Activated B cell treated with CpG ODN at 0.5 μM for 24 hours (primary cell): ENCODE measurements at regions of chr15 and their contacts with region 1.

Region 1: GRCh38 chr15:40743921-40744814 is 10.9 kb downstream of the RMDN3 start:
- DNase-seq: no peak
- ATAC-seq: no peak
- H3K4me3 Mint-ChIP-seq: no peak overlapping the region
- H3K27ac Mint-ChIP-seq: no peak overlapping the region
- H3K4me1 Mint-ChIP-seq: no peaks in the 10 kb centered on the region
- H3K27me3 Mint-ChIP-seq: no peaks in the 10 kb centered on the region
- CTCF ChIP-seq: no peak

Region 2: GRCh38 chr15:40684381-40684780 is 59.8 kb before region 1 on chr15:
- CTCF ChIA-PET with region 1: interaction called, 5 read pairs
- POLR2A ChIA-PET with region 1: no interaction called
- intact Hi-C with region 1: loop called (anchors 2 kb)
- DNase-seq: no peak
- ATAC-seq: no peak
- H3K4me3 Mint-ChIP-seq: no peak overlapping the region
- H3K27ac Mint-ChIP-seq: no peak overlapping the region
- H3K4me1 Mint-ChIP-seq: peaks cover 15% of the 10 kb centered on the region
- H3K27me3 Mint-ChIP-seq: no peaks in the 10 kb centered on the region
- CTCF ChIP-seq: no peak

Region 3: DNA sequence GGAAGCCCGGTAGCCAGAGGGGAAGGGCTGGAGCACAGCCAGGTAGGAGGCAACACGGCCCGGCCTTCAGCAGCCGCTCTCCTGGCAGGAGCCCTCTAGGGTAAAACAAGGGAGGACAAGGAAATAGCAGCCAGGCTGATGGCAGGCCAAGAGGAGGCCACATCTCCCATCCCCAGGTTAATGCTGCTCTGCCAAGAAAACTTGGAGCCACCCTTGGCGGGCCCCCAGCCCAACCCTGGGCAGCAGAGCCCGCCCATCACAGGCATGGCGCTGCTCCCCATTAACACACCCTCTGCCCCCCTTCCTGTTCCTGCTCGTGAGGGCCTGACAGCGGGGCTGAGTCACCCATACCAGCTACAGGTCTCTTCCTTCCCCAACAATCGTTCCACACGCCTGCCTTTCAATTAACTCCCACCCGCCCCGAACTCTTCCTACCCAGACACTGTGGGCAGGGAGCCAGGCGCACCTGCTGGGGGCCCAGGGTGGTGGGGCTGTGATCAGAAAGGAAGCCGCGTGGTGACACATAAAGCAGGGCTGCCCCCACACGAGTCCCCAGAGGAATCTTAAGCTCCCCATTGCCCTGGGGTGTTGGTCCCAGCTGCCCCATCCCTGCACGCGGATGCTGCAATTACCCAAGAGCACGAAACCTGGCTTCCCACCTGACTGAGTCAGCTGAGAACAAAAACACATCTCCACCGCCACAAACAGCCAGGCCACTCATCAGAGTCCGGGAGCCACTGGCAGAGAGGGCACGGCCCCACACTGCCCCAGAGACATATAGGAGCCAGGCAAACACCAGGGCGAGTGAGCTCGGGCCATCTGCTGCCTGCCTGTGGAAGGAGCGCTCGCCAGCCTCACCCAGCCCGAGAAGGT is 25.3 kb after region 1 on chr15 and contains the start of gene C15orf62:
- CTCF ChIA-PET with region 1: interaction called, 11 read pairs
- POLR2A ChIA-PET with region 1: no interaction called
- intact Hi-C with region 1: no loop called
- DNase-seq: peak; percentile 81
- ATAC-seq: peak; percentile 84
- H3K4me3 Mint-ChIP-seq: peak within 1 kb of the TSS; percentile 82
- H3K27ac Mint-ChIP-seq: peak within 1 kb of the TSS; percentile 93
- H3K4me1 Mint-ChIP-seq: peaks cover 59% of the 10 kb centered on the region
- H3K27me3 Mint-ChIP-seq: no peaks in the 10 kb centered on the region
- CTCF ChIP-seq: no peak
- total RNA-seq, gene C15orf62: 5.7 and 6.5 TPM in 2 replicates